Activated CD4-positive, alpha-beta memory T cell treated with anti-CD3 and anti-CD28 coated beads, Interleukin-2, amount 10 ng/mL, durations not matched to agents 7 days and 5 days (primary cell): ENCODE measurements at regions of chr11 and their contacts with region 1.

Region 1: DNA sequence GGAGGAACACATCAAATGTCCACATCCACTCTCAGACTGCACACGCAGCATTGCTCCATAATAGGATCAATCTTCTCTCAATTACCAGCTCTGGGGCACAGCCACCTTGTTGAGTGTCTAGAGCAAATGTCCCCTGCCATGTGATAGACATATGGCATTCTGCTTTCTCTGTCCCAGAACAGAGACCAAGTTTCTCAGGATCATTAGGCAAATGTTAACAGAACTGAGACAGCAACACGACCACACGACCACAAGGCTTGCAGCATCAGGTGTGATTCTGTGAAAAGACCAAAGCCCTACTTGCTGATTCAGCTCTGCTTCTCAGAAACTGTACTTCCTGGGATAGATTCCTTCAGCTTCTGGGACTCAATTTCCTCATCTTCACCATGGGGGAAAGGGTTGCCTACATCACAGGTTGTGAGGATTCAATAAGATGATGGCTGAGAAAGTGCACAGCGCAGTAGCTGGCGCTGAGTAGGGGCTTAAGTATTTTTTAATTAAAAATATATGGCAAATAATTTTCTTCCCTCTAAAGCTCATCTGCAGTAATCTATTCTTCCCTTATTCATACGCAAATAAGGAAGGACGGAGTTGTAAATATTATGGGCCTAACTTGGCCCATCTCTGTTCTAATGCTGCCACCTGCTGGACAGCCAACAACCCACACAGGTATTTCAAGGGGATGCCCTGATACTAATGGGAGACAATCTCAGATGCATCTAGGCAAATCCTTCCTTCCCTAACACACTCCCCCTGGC is 54.3 kb upstream of the USP47 start:
- DNase-seq: peak; percentile 73
- H3K4me3 Mint-ChIP-seq: no peak overlapping the region
- H3K27ac Mint-ChIP-seq: no peak overlapping the region
- H3K4me1 Mint-ChIP-seq: peaks cover 1% of the 10 kb centered on the region
- H3K27me3 Mint-ChIP-seq: peaks cover 7% of the 10 kb centered on the region

Region 2: GRCh38 chr11:11798586-11799438 is 11.3 kb after region 1 on chr11:
- CTCF ChIA-PET with region 1: interaction called, 10 read pairs
- POLR2A ChIA-PET with region 1: no interaction called
- DNase-seq: peak; percentile 81
- H3K4me3 Mint-ChIP-seq: no peak overlapping the region
- H3K27ac Mint-ChIP-seq: no peak overlapping the region
- H3K4me1 Mint-ChIP-seq: no peaks in the 10 kb centered on the region
- H3K27me3 Mint-ChIP-seq: peaks cover 35% of the 10 kb centered on the region

Region 3: GRCh38 chr11:11966826-11967668 is 179.6 kb after region 1 on chr11:
- CTCF ChIA-PET with region 1: no interaction called
- POLR2A ChIA-PET with region 1: no interaction called
- DNase-seq: peak; percentile 81
- H3K4me3 Mint-ChIP-seq: no peak overlapping the region
- H3K27ac Mint-ChIP-seq: no peak overlapping the region
- H3K4me1 Mint-ChIP-seq: peaks cover 5% of the 10 kb centered on the region
- H3K27me3 Mint-ChIP-seq: peaks cover 11% of the 10 kb centered on the region